ENCODE measurements at regions of chr1 and their contacts with region 1.

Region 1: DNA sequence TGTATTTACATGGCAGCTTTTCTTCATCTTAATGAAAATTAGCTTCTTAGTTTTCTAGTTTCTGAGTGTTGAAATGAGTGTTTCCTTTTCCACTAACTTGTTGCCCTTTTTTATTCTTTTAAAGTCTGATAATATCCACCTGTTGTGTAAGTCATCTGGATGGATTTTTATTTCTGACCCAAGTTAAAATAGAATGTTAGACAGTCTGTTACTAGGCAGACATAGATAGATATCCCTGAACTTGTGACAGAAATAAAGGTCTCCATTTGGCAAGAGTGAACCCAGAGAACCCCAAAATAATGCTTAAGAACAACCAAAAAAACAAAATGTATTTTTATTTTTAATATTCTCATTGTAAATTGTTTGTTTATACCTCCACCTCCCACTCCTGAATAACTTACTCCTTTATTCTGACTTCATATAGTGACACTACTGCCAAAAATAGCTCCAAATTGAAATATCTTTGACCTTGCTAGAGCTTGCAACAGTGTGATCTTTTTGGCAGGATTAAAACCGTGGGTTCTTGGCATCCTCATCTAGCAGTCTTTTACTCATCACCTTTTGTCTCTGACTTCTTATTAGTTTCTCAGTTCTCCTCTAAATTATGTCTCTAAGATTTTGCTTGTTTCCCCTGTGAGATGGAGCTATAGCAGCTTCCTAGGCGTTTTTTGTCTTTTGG is 26.9 kb upstream of the SH3D21 start:
- DNase-seq: no peak
- H3K4me3 ChIP-seq: no peak overlapping the region
- H3K27ac ChIP-seq: peak overlapping the region in 1 of 4 donors; percentile 33
- H3K4me1 ChIP-seq: peaks cover 11 to 61% (median 12%) of the 10 kb centered on the region in 3 donors
- H3K27me3 ChIP-seq: no peaks in the 10 kb centered on the region
- CTCF ChIP-seq: no peak
- POLR2A ChIP-seq: no peak

Region 2: GRCh38 chr1:36203554-36204346 is 75.5 kb before region 1 on chr1:
- intact Hi-C with region 1: loop called (anchors 10 kb)
- DNase-seq: no peak
- H3K4me3 ChIP-seq: peak overlapping the region in 1 of 4 donors; percentile 19
- H3K27ac ChIP-seq: peak overlapping the region; percentile 39 to 85 (median 58)
- H3K4me1 ChIP-seq: peaks cover 0 to 49% (median 22%) of the 10 kb centered on the region in 3 donors
- H3K27me3 ChIP-seq: no peaks in the 10 kb centered on the region
- CTCF ChIP-seq: no peak
- POLR2A ChIP-seq: no peak

Region 3: DNA sequence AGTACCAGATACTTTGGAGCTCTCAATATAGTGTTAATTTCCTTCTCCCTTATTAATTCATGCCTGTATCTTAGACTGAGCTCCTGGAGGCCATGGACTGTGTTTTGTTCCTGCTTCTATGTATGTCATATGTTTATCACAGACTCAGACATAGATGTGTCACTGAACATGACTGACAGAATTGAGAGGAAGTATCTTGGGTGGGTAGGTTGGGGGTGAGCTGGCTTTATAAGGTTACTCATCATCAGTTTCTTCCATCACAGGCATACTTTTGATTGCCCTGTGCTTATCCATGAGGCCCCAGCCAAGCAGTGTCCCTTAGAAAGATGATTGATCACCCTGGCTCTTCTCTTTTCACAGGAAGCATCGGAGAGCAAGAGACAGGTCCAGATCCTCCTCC is 21.3 kb after region 1 on chr1:
- intact Hi-C with region 1: no loop called
- DNase-seq: no peak
- H3K4me3 ChIP-seq: no peak overlapping the region
- H3K27ac ChIP-seq: peak overlapping the region; percentile 69 to 81 (median 72)
- H3K4me1 ChIP-seq: peaks cover 10 to 22% (median 11%) of the 10 kb centered on the region in 3 donors
- H3K27me3 ChIP-seq: no peaks in the 10 kb centered on the region
- CTCF ChIP-seq: no peak
- POLR2A ChIP-seq: no peak

Region 4: GRCh38 chr1:36377791-36378492 is 98.7 kb after region 1 on chr1:
- intact Hi-C with region 1: no loop called
- DNase-seq: no peak
- H3K4me3 ChIP-seq: no peak overlapping the region
- H3K27ac ChIP-seq: peak overlapping the region; percentile 9 to 53 (median 36)
- H3K4me1 ChIP-seq: peaks cover 28 to 84% (median 32%) of the 10 kb centered on the region in 3 donors
- H3K27me3 ChIP-seq: no peaks in the 10 kb centered on the region
- CTCF ChIP-seq: no peak
- POLR2A ChIP-seq: no peak